ENCODE measurements at regions of chr9 and their contacts with region 1.

Region 1: DNA sequence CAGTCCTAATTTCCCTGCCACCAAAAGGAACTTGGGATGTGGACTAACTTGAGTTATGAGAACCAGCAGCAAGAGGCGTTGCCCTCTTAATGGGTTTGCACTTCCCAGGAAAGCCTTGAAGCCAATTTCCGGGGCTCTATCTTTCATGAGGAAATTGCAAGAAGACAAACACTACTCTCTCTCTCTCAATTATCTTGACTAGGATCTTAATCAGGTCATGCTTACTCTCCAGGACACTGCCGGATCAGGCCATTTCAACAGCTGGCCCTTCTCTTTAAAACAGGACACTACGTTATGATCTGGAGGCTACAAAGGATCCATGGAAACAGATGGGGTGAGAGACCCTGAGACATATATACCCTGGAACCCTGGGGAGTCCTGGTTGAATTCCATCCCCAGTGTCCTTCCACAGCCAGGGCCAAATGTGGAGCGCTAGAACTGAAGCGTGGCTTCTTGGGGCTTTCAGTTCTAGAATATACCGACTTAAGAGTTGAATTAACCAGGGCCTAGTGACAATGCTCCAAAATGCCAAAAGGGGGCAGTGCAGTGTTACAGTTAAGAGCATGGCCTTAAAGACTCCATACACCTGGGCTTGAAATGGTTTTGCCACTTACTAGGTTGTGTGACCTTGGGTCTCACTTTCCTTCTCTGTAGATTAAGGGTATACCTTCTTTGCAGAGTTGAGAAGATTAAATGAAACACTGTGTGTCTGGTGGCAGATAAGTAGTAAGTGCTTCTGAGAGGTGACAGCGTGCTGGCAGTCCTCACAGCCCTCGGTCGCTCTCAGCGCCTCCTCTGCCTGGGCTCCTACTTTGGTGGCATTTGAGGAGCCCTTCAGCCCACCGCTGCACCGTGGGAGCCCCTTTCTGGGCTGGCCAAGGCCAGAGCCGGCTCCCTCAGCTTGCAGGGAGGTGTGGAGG is 21.1 kb downstream of the FAM219A start:
- DNase-seq: peak; percentile 40
- ATAC-seq: peak; percentile 98
- H3K4me3 ChIP-seq: no peak overlapping the region
- H3K27ac ChIP-seq: no peak overlapping the region
- H3K4me1 ChIP-seq: no peaks in the 10 kb centered on the region
- H3K27me3 ChIP-seq: no peaks in the 10 kb centered on the region
- CTCF ChIP-seq: peak; percentile 71 to 90 (median 88)
- EP300 ChIP-seq: no peak
- POLR2A ChIP-seq: no peak
- RAD21 ChIP-seq: peak; percentile 90

Region 2: DNA sequence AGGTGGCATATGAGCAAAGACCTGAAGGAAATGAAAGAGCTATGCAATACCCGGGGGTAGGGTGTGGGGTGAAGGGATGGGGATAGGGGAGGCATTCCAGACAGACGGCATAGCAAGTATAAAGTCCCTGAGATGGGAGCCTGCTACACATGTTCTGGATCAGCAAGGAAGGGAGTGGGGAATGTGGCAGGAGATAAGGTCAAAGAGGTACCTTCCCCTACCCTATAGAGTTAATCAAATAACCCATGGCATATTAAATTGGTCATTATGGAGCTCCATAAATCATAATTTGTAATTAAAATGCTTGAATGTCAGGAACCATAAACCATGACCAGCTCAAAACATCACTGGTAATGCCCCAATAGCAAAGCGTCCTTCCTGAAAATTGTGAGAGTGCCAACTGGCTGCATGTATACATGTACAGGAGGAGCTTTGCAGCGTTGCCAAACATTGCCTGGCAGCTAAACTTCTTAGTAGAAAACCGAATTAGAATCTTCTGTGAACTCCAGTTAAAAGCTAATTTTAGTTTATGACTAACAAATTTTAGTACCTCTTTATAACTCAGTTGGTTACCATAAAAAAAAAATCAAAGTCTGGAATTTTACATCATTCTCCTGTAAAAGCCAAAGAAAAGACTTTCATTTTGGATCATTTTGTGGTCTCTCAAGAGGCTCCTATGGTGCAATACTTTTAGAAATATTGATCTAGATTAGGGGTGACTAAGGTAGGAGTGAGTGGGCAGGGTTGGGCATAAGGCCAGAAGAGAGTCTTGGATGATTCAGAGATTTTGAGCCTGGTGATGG is 26.0 kb after region 1 on chr9:
- CTCF ChIA-PET with region 1: no interaction called
- POLR2A ChIA-PET with region 1: no interaction called
- RAD21 ChIA-PET with region 1: no interaction called
- SMC1A ChIA-PET with region 1: no interaction called
- in situ Hi-C with region 1: no loop called
- intact Hi-C with region 1: loop called (anchors 2 kb)
- DNase-seq: no peak
- ATAC-seq: no peak
- H3K4me3 ChIP-seq: no peak overlapping the region
- H3K27ac ChIP-seq: no peak overlapping the region
- H3K4me1 ChIP-seq: no peaks in the 10 kb centered on the region
- H3K27me3 ChIP-seq: peaks cover 0 to 11% of the 10 kb centered on the region in 2 experiments; a peak in 3 of 4 replicates
- CTCF ChIP-seq: no peak
- EP300 ChIP-seq: no peak
- POLR2A ChIP-seq: no peak
- RAD21 ChIP-seq: no peak

Region 3: DNA sequence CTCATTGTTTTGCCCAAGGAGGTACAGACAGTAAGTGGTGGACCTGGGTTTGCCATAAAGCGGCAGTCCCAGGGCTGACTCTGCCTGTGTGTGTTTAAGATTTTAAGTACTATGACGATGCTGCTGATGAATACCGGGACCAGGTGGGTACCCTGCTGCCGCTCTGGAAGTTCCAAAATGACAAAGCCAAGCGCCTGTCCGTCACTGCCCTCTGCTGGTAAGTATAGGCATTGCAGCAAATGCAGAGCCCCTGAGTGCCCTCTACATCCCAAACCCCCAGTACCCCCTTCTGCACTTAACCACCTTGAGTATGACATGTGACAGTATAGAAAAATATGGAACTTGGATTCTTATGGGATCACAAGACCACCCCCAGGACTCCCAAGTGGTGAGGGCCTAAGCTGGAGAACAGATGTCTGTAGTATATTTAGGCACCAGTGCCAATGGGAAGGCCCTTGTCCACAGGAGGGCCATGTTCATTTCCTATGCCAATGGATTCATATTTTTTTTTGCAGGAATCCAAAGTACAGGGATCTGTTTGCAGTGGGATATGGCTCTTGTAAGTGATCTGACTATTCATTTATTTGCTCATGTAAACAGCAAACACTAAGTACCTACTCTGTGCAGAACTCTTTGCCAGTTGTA is 63.5 kb after region 1 on chr9:
- CTCF ChIA-PET with region 1: interaction called, 5 read pairs
- POLR2A ChIA-PET with region 1: no interaction called
- RAD21 ChIA-PET with region 1: interaction called, 3 read pairs
- SMC1A ChIA-PET with region 1: interaction called, 5 read pairs
- in situ Hi-C with region 1: no loop called
- intact Hi-C with region 1: loop called (anchors 1 kb)
- DNase-seq: no peak
- ATAC-seq: peak; percentile 89
- H3K4me3 ChIP-seq: no peak overlapping the region
- H3K27ac ChIP-seq: no peak overlapping the region
- H3K4me1 ChIP-seq: no peaks in the 10 kb centered on the region
- H3K27me3 ChIP-seq: peaks cover 6 to 8% of the 10 kb centered on the region in 2 experiments
- CTCF ChIP-seq: peak; percentile 82 to 98 (median 94)
- EP300 ChIP-seq: no peak
- POLR2A ChIP-seq: no peak
- RAD21 ChIP-seq: peak; percentile 76

Region 4: DNA sequence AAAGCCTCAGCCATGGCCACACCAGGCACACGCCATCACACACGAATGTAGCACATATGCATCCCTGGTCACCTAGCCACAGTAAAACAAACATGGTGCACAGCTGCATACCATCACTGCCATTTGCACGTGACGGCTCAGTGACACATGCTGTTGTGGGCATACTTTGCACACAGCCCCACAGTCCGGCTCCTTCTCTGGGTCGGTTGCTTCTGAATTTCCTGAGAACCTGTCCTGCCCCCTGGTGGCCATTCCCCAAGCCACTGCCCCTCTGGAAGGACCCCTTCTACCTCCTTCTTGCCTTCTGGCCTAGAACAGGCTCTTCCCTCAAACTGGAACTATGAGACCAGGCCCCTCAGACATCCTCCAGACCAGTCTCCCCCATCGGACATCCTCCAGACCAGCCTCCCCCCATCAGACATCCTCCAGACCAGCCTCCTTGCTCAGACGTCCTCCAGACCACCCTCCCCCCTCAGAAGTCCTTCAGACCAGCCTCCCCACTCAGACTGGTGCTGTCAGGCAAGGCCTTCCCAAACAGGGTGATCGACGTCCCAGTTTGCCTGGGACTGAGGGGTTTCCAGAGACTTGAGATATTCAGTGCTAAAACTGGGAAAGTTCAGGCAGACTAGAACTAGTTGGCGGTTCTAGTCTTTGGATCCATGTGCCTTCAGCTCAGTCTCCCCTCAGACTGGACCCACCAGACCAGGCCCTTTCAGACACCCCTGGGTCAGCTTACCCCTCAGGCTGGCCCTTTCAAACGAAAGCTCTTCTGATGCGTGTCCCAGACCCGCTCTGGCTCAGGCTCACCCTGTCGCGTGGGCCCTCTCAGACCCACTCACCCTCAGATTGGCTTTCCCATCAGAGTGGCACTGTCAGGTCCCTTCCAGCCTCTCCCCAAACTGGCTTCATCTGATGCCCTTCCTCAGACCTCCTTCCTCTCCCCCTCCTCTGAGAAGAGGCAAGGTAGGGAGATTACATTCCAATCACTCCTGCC is 109.9 kb after region 1 on chr9:
- CTCF ChIA-PET with region 1: interaction called, 4 read pairs
- POLR2A ChIA-PET with region 1: no interaction called
- RAD21 ChIA-PET with region 1: no interaction called
- SMC1A ChIA-PET with region 1: interaction called, 4 read pairs
- in situ Hi-C with region 1: no loop called
- intact Hi-C with region 1: loop called (anchors 5 kb)
- DNase-seq: no peak
- ATAC-seq: peak; percentile 85
- H3K4me3 ChIP-seq: no peak overlapping the region
- H3K27ac ChIP-seq: no peak overlapping the region
- H3K4me1 ChIP-seq: no peaks in the 10 kb centered on the region
- H3K27me3 ChIP-seq: peaks cover 3 to 8% of the 10 kb centered on the region in 2 experiments
- CTCF ChIP-seq: peak; percentile 48 to 73 (median 70)
- EP300 ChIP-seq: no peak
- POLR2A ChIP-seq: no peak
- RAD21 ChIP-seq: peak; percentile 36

Region 5: GRCh38 chr9:34591248-34591916 is 154.1 kb after region 1 on chr9:
- CTCF ChIA-PET with region 1: interaction called, 7 read pairs
- POLR2A ChIA-PET with region 1: no interaction called
- RAD21 ChIA-PET with region 1: no interaction called
- SMC1A ChIA-PET with region 1: interaction called, 3 read pairs
- in situ Hi-C with region 1: no loop called
- intact Hi-C with region 1: loop called (anchors 1 kb)
- DNase-seq: no peak
- ATAC-seq: peak; percentile 97
- H3K4me3 ChIP-seq: no peak overlapping the region
- H3K27ac ChIP-seq: no peak overlapping the region
- H3K4me1 ChIP-seq: peaks cover 2% of the 10 kb centered on the region; the same call in 1 of the 2 replicates
- H3K27me3 ChIP-seq: peaks cover 28 to 50% of the 10 kb centered on the region in 2 experiments
- CTCF ChIP-seq: peak; percentile 75 to 94 (median 87)
- EP300 ChIP-seq: no peak
- POLR2A ChIP-seq: no peak
- RAD21 ChIP-seq: peak; percentile 66